Gastrocnemius medialis (tissue), 4 donors: ENCODE measurements at regions of chr18 and their contacts with region 1.

Region 1: DNA sequence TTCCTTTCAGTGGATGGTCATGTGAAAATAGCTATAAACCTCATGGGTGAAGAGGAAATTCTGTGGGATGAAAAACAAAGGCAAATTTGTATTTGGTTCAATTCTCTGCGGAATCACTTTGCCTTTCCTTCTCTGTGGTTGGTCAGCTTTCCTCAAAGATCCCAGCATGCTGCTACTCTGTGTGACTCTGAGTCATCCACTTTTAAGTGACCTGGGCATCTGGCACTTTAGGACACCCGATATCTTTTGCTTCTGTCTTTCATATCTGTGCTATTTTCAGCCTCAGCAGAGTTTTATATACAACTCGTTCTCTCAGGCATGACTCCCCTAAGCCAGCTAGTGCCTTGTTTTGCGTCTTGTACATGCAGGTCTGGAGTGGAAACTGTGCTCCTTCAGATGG is 217.0 kb upstream of the PIEZO2 start:
- DNase-seq: peak; percentile 76 to 84
- ATAC-seq: peak; percentile 99 to 100
- H3K4me3 ChIP-seq: peak overlapping the region in 1 of 4 donors; percentile 27
- H3K27ac ChIP-seq: peak overlapping the region; percentile 91 to 95 (median 92)
- H3K4me1 ChIP-seq: peaks cover 11 to 25% of the 10 kb centered on the region in 2 donors
- H3K27me3 ChIP-seq: no peaks in the 10 kb centered on the region
- CTCF ChIP-seq: no peak
- POLR2A ChIP-seq: peak in 1 of 2 donors; percentile 45

Region 2: GRCh38 chr18:11178951-11179549 is 187.4 kb before region 1 on chr18:
- in situ Hi-C with region 1: no loop called
- intact Hi-C with region 1: loop called (anchors 1 kb)
- DNase-seq: peak; percentile 86 to 92
- ATAC-seq: peak; percentile 88
- H3K4me3 ChIP-seq: peak overlapping the region; percentile 13 to 32 (median 22)
- H3K27ac ChIP-seq: peak overlapping the region; percentile 88 to 94 (median 91)
- H3K4me1 ChIP-seq: peaks cover 45 to 48% of the 10 kb centered on the region in 2 donors
- H3K27me3 ChIP-seq: no peaks in the 10 kb centered on the region
- CTCF ChIP-seq: no peak
- POLR2A ChIP-seq: peak in 1 of 2 donors; percentile 41

Region 3: DNA sequence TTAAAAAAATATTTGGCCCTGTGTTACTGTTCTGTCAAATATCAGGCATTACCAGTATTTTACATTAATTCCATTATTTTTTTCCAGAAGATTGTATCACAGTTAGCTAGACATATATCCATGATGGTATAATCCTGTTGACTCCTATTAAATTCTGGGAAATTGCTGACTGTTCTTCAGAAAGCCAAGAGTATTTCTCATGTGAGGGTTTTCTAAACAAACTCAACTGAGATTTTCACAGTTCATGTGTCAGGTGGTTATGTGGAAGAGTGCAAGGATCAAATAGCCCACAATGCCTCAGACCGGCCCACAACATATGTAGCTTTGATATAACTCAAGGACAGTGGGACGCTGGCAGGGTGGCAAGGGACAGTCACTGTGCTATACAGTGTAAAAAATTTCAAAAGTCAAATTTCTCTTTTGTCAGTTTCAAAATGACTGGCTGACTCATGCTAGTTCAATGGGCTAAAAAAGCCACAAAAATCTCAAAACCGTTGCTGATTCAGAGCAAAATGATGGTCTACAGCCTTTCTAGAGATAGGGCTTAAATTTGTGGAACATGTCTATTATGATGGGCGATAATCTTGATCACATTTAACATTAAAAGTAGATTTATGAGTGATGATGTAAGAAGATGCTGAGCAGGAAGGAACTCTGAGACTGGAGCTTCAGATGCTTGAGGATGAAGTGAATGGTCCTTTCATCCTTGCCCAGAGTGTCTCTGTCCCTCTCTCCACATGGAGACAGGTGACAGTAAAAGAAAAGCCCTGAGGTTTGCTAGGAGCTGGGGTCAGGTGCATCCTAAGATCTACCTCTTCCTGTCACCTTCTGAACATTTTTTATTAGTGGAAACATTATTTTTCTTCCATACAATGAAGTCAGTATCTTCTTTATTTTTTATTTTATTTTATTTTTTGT is 41.2 kb before region 1 on chr18:
- in situ Hi-C with region 1: no loop called
- intact Hi-C with region 1: loop called (anchors 2 kb)
- DNase-seq: no peak
- ATAC-seq: no peak
- H3K4me3 ChIP-seq: no peak overlapping the region
- H3K27ac ChIP-seq: peak overlapping the region; percentile 43 to 72 (median 62)
- H3K4me1 ChIP-seq: peaks cover 16 to 29% of the 10 kb centered on the region in 2 donors
- H3K27me3 ChIP-seq: no peaks in the 10 kb centered on the region
- CTCF ChIP-seq: no peak
- POLR2A ChIP-seq: no peak

Region 4: GRCh38 chr18:11980555-11981382 is 614.4 kb after region 1 on chr18:
- in situ Hi-C with region 1: no loop called
- intact Hi-C with region 1: loop called (anchors 5 kb)
- DNase-seq: peak; percentile 99
- ATAC-seq: peak; percentile 67 to 72
- H3K4me3 ChIP-seq: peak overlapping the region; percentile 71 to 94 (median 86)
- H3K27ac ChIP-seq: peak overlapping the region; percentile 97 to 100 (median 99)
- H3K4me1 ChIP-seq: peaks cover 21 to 38% of the 10 kb centered on the region in 2 donors
- H3K27me3 ChIP-seq: no peaks in the 10 kb centered on the region
- CTCF ChIP-seq: peak in 4 of 5 experiments; percentile 14 to 41 (median 21)
- POLR2A ChIP-seq: peak; percentile 98 to 99